ENCODE measurements at regions of chr14 and their contacts with region 1.

Region 1: GRCh38 chr14:73949744-73950734 is at the starts of genes COQ6 and FAM161B:
- DNase-seq: peak; percentile 94 to 97 (median 95)
- ATAC-seq: peak; percentile 98 to 99 (median 99)
- H3K4me3 ChIP-seq: peak within 1 kb of the TSS; percentile 62 to 99 (median 76)
- H3K27ac ChIP-seq: peak within 1 kb of the TSS; percentile 66 to 96 (median 92)
- H3K4me1 ChIP-seq: peaks cover 4 to 19% (median 12%) of the 10 kb centered on the region in 12 donors
- H3K27me3 ChIP-seq: no peaks in the 10 kb centered on the region
- CTCF ChIP-seq: peak in 4 of 12 donors; percentile 3 to 23 (median 11)
- POLR2A ChIP-seq: peak in 1 of 2 donors; percentile 75
- total RNA-seq, gene COQ6: 30.4 to 115 (median 48.4) TPM
- total RNA-seq, gene FAM161B: 2.8 to 6.5 (median 3.6) TPM

Region 2: DNA sequence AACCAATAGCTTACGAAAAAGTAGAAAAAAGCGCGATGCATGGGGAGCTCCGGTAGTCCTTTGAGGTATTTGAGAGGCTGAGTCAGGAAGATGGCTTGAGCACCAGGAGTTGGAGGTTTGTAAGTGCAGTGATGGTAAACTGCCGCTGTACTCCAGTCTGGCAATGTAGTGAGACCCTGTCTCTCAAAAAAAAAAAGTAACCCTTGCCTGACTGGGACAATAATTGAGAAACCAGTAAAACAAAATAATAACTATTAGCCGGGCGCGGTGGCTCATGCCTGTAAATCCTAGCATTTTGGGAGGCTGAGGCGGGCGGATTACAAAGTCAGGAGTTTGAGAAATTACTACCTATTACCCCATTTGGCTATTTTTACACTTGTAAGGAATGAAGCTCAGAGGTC is 381.7 kb before region 1 on chr14:
- intact Hi-C with region 1: no loop called
- DNase-seq: no peak
- ATAC-seq: no peak
- H3K4me3 ChIP-seq: peak overlapping the region; percentile 55 to 94 (median 78)
- H3K27ac ChIP-seq: peak overlapping the region in 11 of 12 donors; percentile 85 to 97 (median 93)
- H3K4me1 ChIP-seq: peaks cover 0 to 43% (median 25%) of the 10 kb centered on the region in 12 donors
- H3K27me3 ChIP-seq: no peaks in the 10 kb centered on the region
- CTCF ChIP-seq: no peak
- POLR2A ChIP-seq: no peak

Region 3: DNA sequence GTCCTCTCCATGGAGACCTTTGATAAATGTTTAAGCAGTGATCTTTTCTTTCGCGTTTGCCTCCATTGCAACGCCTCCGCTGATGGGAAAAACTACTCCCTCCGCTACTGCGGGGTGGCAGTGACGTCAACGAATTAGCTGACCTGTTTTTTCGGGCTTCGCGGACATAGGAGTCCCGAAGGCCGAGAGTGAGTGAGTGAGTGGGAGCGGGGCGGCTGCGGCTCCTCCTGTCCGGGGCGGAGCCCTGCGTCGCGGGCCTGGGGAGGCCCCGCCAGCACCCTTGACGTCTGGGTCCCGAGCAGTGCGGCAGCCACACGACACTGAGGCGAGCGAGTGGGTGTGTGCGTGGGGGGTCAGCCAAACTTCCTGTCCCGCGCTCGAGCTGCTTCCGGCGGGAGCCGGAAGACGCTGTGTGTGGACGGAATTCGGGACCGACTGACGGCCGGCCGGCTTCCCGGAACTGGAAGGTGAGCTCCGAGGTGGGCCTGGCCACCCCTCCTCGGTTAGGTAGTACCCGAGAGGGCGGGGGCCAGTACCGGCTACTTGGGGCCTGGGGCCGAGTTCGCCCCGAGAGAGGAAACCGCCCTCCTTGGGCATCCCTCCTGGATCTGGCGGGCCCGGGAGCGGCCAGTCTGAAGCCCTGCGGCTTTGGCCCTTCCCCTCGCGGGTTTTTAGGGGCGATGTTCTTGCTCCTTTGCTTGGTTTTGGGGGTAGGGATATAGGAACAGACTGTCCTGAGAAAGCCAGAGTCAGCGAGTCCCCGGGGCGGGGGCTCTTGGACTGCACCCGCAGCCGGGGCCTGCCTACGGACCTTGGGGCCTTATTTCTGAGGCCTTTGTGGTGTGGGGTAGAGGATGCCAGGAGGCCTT is 63.4 kb before region 1 on chr14 and contains the start of gene ZNF410:
- intact Hi-C with region 1: loop called in 1 of 10 experiments (anchors 2 kb)
- DNase-seq: peak; percentile 94 to 97 (median 96)
- ATAC-seq: peak; percentile 99 to 100 (median 100)
- H3K4me3 ChIP-seq: peak within 1 kb of the TSS; percentile 54 to 97 (median 90)
- H3K27ac ChIP-seq: peak within 1 kb of the TSS; percentile 83 to 98 (median 94)
- H3K4me1 ChIP-seq: peaks cover 0 to 34% (median 19%) of the 10 kb centered on the region in 12 donors
- H3K27me3 ChIP-seq: no peaks in the 10 kb centered on the region
- CTCF ChIP-seq: no peak
- POLR2A ChIP-seq: peak in 1 of 2 donors; percentile 74
- total RNA-seq, gene ZNF410: 14.7 to 29.0 (median 20.1) TPM

Measured in heart left ventricle (tissue), 16 donors.